OCI-LY7 (cell line): ENCODE measurements at regions of chr1 and their contacts with region 1.

Region 1: GRCh38 chr1:100132566-100133477 is at the starts of genes SASS6 and TRMT13:
- DNase-seq: peak; percentile 97
- H3K4me3 ChIP-seq: peak within 1 kb of the TSS; percentile 96
- H3K27ac ChIP-seq: peak within 1 kb of the TSS; percentile 74
- H3K4me1 ChIP-seq: peaks cover 30% of the 10 kb centered on the region
- CTCF ChIP-seq: no peak
- total RNA-seq, gene SASS6: 12.1 and 12.6 TPM in 2 replicates
- total RNA-seq, gene TRMT13: 14.5 and 24.2 TPM in 2 replicates

Region 2: GRCh38 chr1:99808391-99809115 is 324.3 kb before region 1 on chr1:
- CTCF ChIA-PET with region 1: no interaction called
- POLR2A ChIA-PET with region 1: no interaction called
- intact Hi-C with region 1: loop called (anchors 2 kb)
- DNase-seq: peak; percentile 84
- H3K4me3 ChIP-seq: no peak overlapping the region
- H3K27ac ChIP-seq: no peak overlapping the region
- H3K4me1 ChIP-seq: peaks cover 5% of the 10 kb centered on the region
- CTCF ChIP-seq: peak; percentile 87

Region 3: DNA sequence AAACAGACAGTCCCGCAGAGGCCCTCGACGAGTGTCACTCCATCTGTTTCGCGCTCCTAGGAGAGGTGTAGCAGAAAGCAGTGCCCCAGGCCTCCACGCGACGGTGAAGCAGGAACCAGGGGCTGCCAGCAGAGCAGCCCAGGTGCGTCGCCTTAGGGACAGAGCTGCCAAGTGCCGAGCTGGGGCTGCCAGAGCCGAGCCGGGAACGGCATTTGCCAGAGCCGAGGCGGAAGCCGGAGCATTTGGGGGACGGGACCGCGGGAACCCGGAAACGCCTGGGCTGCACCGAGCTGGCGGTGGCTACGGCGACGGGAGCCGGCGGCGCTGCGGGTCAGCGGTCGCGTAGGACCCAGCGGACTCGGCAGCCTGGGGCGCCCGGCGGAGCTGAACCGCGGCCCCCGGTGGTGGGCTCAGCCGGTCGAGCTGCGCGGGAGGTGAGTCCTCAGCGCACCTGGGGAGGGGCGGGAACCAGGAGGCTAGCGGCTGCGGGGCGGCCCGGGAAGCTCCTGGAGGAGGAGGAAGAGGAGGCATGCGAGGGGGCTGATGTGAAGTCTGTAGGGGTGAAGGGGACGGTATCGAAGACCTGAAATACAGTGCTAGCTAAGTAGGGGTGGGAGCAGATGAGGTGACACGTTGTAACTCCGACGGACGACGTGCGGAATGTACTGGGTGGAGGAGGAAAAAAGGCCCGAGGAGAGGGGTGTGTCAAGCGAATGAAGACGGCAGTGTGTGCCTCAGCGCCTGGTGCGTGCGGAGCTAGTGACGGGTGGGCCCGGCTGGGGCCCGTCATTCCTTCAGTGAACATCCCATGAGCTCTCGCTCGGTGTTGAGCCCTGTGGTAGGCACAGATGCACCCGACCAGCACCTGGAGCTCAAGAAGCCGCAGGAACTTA is 162.8 kb before region 1 on chr1 and contains the start of gene SLC35A3:
- CTCF ChIA-PET with region 1: no interaction called
- POLR2A ChIA-PET with region 1: interaction called, 5 read pairs
- intact Hi-C with region 1: loop called (anchors 2 kb)
- DNase-seq: peak; percentile 92
- H3K4me3 ChIP-seq: peak within 1 kb of the TSS; percentile 91
- H3K27ac ChIP-seq: peak within 1 kb of the TSS; percentile 74
- H3K4me1 ChIP-seq: peaks cover 19% of the 10 kb centered on the region
- CTCF ChIP-seq: no peak
- total RNA-seq, gene SLC35A3: 15.9 and 26.8 TPM in 2 replicates

Region 4: GRCh38 chr1:100107696-100108095 is 25.1 kb before region 1 on chr1:
- CTCF ChIA-PET with region 1: no interaction called
- POLR2A ChIA-PET with region 1: no interaction called
- intact Hi-C with region 1: no loop called
- DNase-seq: no peak
- H3K4me3 ChIP-seq: no peak overlapping the region
- H3K27ac ChIP-seq: no peak overlapping the region
- H3K4me1 ChIP-seq: peaks cover 7% of the 10 kb centered on the region
- CTCF ChIP-seq: no peak

Region 5: GRCh38 chr1:100249537-100250257 is 116.9 kb after region 1 on chr1 and contains the start of gene DBT:
- CTCF ChIA-PET with region 1: no interaction called
- POLR2A ChIA-PET with region 1: no interaction called
- intact Hi-C with region 1: loop called (anchors 2 kb)
- DNase-seq: peak; percentile 95
- H3K4me3 ChIP-seq: peak within 1 kb of the TSS; percentile 74
- H3K27ac ChIP-seq: peak within 1 kb of the TSS; percentile 4
- H3K4me1 ChIP-seq: peaks cover 14% of the 10 kb centered on the region
- CTCF ChIP-seq: no peak
- total RNA-seq, gene DBT: 1.8 and 3.3 TPM in 2 replicates

Region 6: DNA sequence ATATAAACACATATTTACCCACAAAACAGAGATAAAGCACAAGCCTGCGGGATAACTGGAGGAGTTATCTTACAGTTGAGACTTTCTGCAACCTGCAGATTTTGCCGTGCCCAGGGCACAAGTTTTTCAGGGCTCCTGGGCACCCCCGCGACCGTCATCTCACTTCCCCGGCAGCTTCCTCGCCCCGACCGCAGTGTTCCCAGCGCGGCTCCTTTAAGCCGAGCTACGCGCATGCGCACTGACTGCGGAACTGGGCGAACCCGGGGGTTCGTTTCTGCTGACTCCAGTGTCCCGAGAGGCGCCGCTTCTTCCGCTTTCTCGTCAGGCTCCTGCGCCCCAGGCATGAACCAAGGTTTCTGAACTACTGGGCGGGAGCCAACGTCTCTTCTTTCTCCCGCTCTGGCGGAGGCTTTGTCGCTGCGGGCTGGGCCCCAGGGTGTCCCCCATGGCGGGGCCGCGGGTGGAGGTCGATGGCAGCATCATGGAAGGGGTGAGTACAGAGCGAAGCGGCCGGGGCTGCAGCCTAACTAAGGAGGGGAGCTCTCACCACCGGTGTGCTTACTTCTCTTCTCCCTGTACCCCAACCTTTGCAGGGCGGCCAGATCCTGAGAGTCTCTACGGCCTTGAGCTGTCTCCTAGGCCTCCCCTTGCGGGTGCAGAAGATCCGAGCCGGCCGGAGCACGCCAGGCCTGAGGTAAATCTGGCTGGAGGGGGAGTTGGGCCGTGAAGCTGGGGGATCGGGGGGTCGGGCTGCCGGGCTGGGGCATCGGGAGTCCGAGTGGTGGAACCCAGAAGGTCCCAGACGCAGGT is 133.3 kb after region 1 on chr1 and contains the start of gene RTCA:
- CTCF ChIA-PET with region 1: no interaction called
- POLR2A ChIA-PET with region 1: no interaction called
- intact Hi-C with region 1: loop called (anchors 5 kb)
- DNase-seq: peak; percentile 99
- H3K4me3 ChIP-seq: peak within 1 kb of the TSS; percentile 100
- H3K27ac ChIP-seq: peak within 1 kb of the TSS; percentile 68
- H3K4me1 ChIP-seq: peaks cover 19% of the 10 kb centered on the region
- CTCF ChIP-seq: no peak
- total RNA-seq, gene RTCA: 25.9 and 45.4 TPM in 2 replicates

Region 7: GRCh38 chr1:100459358-100460114 is 326.7 kb after region 1 on chr1:
- CTCF ChIA-PET with region 1: no interaction called
- POLR2A ChIA-PET with region 1: interaction called, 4 read pairs
- intact Hi-C with region 1: loop called (anchors 10 kb)
- DNase-seq: peak; percentile 74
- H3K4me3 ChIP-seq: no peak overlapping the region
- H3K27ac ChIP-seq: no peak overlapping the region
- H3K4me1 ChIP-seq: peaks cover 8% of the 10 kb centered on the region
- CTCF ChIP-seq: peak; percentile 97

Region 8: GRCh38 chr1:100895540-100896483 is 763.0 kb after region 1 on chr1 and contains the start of gene SLC30A7:
- CTCF ChIA-PET with region 1: interaction called, 3 read pairs
- POLR2A ChIA-PET with region 1: no interaction called
- intact Hi-C with region 1: loop called (anchors 10 kb)
- DNase-seq: peak; percentile 88
- H3K4me3 ChIP-seq: peak within 1 kb of the TSS; percentile 99
- H3K27ac ChIP-seq: peak within 1 kb of the TSS; percentile 77
- H3K4me1 ChIP-seq: peaks cover 30% of the 10 kb centered on the region
- CTCF ChIP-seq: no peak
- total RNA-seq, gene SLC30A7: 5.5 and 8.6 TPM in 2 replicates